ENCODE measurements at regions of chr22 and their contacts with region 1.

Region 1: DNA sequence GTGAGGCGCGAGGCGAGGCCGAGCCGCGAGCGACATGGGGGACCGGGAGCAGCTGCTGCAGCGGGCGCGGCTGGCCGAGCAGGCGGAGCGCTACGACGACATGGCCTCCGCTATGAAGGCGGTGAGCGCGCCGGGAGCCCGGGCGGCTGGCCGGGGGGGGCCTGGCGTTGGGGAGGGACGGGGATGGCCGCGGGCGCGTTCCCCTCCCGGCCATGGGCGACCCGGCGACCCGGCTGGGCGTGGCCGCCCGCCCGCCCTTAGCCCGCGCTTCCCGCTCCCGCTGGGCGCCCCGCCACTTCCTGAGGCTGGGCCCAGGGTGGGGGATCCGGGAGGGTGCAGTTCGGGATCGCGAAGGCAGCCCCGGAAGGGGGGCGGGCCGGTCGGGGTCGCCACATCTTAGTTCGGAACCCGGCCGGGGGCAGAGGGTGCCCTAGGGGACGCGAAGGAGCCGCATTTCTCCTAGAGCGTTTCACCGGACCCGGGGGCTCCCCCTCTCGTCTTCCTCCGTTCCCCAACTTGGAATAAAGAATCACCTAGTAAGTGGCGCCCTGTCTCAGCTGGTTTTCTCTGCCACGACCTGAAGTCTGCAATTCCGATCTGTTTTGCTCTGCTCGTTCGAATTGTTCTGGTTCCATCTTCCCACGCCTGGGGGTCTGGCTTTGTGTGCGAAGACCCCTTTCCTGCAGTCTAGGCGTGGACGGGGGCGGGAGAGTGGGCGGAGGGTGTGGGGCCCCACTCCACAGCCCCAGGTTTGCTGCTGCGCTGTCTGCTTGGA is 552 bp downstream of the YWHAH start:
- H3K4me3 Mint-ChIP-seq: no peak overlapping the region
- H3K27ac Mint-ChIP-seq: no peak overlapping the region
- H3K4me1 Mint-ChIP-seq: peaks cover 39% of the 10 kb centered on the region
- H3K27me3 Mint-ChIP-seq: no peaks in the 10 kb centered on the region

Region 2: GRCh38 chr22:31661851-31662656 is 282.8 kb before region 1 on chr22 and contains the start of gene PISD:
- intact Hi-C with region 1: loop called (anchors 5 kb)
- H3K4me3 Mint-ChIP-seq: peak within 1 kb of the TSS; percentile 90
- H3K27ac Mint-ChIP-seq: peak within 1 kb of the TSS; percentile 90
- H3K4me1 Mint-ChIP-seq: peaks cover 19% of the 10 kb centered on the region
- H3K27me3 Mint-ChIP-seq: no peaks in the 10 kb centered on the region

Region 3: DNA sequence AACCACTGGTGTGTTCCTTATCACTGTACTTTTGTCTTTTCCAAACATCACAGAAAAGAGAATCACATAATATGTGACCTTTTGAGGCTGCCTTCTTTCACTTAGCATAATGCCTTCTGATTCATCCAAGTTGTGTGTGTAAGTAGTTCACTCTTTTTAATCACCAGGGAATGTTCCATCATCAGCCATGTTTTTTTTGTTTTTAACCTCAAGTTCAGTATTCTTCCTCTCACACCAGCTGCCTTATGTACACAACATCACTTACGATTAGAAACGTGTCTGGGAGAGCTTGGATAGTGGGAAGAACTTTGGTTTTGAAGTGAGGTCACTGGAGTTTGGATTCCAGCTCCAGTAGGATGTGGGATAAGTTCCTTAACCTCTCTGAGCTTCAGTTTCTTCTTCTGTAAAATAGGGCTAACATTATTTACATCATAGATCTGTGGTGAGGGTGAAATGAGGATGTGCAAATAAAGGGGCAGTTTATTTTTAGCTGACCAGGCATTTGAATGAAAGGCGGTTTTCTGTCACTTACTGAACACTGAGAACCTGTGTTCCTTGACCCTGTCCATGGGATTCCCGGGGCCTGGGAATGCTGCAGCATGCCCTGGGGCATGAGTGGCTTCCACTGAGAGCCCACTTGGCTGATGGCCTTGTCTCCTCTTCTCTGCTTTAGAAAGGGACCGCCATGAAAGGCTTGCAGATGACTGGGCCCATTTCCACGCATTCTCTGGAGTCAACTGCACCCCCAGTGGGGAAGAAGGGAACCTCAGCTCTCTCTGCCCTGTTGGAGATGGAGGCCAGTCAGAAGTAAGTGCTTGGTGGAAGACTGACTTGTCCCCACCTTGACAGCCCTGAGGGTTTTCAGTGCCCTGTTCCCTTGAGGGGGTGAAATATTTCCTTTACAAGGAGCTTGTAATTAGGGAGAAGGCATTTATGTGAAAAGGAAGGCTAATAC is 98.4 kb before region 1 on chr22:
- intact Hi-C with region 1: loop called (anchors 5 kb)
- H3K4me3 Mint-ChIP-seq: no peak overlapping the region
- H3K27ac Mint-ChIP-seq: no peak overlapping the region
- H3K4me1 Mint-ChIP-seq: peaks cover 14% of the 10 kb centered on the region
- H3K27me3 Mint-ChIP-seq: no peaks in the 10 kb centered on the region

Region 4: DNA sequence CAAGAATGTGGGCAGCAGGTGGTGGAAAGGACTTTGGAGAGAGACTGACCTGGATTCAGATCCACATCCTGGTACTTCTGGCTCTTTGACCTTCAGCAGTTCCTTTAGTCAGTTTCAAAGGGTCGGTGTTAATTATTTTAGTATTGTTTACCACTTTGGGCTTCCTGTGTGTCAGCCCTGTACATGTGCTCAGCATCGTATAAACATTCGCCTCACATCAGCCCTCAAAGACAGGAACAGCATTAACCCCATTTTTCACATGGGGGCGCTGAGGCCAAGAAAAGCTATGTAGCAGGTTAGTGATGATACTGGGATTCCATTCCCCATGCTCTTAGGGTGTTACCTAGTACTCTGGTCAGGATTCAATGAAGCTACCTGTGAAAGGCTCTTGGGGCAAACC is 72.7 kb before region 1 on chr22:
- intact Hi-C with region 1: loop called (anchors 5 kb)
- H3K4me3 Mint-ChIP-seq: no peak overlapping the region
- H3K27ac Mint-ChIP-seq: no peak overlapping the region
- H3K4me1 Mint-ChIP-seq: peaks cover 44% of the 10 kb centered on the region
- H3K27me3 Mint-ChIP-seq: no peaks in the 10 kb centered on the region

Region 5: DNA sequence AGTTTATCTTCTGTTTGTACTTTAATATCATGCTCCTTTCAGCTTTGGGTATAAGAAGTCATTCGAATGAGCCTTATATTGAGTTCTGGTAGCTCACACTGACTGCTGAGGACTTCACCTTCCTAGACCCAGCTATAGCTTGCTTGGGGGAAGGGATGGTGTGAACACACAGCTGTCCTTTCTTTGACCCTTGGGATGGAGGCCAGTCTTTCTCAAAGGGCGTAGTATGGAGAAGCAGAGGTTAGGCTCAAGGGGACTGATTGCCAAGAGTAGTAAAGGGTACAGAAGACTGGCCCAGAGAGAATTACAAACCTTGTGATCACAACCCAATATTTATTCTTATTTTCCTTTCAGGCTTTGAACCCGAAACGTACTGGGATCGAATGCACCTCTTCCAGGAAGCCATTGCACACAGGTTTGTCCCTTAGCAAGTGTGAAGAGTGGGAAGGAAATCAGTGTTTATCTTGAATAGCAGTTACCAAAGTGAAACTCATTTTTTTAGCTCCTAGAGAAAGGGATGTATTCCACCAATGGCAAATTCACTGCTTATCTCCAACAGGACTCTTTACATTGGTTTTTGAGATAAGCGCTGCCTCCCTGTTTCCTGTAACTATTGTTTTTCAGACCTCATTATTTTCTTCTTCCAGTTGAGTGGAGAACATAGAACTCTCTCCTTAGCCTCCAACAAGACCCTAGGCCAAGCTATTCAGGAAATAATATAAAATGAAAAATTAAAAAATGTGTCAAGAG is 43.3 kb before region 1 on chr22:
- intact Hi-C with region 1: loop called (anchors 5 kb)
- H3K4me3 Mint-ChIP-seq: no peak overlapping the region
- H3K27ac Mint-ChIP-seq: no peak overlapping the region
- H3K4me1 Mint-ChIP-seq: peaks cover 21% of the 10 kb centered on the region
- H3K27me3 Mint-ChIP-seq: no peaks in the 10 kb centered on the region

Region 6: DNA sequence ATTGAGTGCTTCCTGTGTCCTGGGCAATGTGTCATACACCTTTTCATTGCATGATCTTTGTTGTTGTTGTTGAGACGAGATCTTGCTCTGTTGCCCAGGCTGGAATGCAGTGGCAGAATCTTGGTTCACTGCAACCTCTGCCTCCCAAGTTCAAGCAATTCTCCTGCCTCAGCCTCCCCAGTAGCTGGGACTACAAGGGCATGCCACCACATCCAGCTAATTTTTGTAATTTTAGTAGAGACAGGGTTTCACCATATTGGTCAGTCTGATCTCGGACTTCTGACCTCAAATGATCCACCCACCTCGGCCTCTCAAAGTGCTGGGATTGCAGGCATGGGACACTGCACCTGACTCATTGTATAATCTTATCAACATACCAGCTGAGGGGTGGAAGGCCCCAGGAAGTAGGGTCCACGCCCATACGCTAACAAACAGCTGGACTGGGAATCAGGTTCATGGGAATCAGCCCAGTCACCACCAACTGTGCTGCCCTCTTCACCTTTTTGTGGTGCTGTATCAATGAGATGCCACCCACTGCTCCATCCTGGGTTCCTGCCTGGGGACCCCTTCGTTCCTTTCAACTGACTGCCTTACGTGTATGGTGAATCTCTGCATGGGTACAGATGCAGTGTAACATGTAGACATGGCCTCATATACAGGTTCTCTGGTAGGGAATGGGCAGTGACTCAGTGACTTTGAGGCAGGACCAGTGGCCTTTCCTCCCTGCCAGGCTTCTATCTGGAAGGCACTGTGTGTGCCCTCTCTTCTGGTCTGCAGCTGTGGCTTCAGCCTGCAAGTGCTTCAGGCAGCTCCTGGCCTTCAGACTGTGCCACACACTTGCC is 33.1 kb before region 1 on chr22:
- intact Hi-C with region 1: no loop called
- H3K4me3 Mint-ChIP-seq: no peak overlapping the region
- H3K27ac Mint-ChIP-seq: no peak overlapping the region
- H3K4me1 Mint-ChIP-seq: peaks cover 18% of the 10 kb centered on the region
- H3K27me3 Mint-ChIP-seq: no peaks in the 10 kb centered on the region

Region 7: GRCh38 chr22:32103658-32104315 is 158.9 kb after region 1 on chr22:
- intact Hi-C with region 1: no loop called
- H3K4me3 Mint-ChIP-seq: no peak overlapping the region
- H3K27ac Mint-ChIP-seq: no peak overlapping the region
- H3K4me1 Mint-ChIP-seq: no peaks in the 10 kb centered on the region
- H3K27me3 Mint-ChIP-seq: peaks cover 12% of the 10 kb centered on the region

Region 8: GRCh38 chr22:32144496-32145274 is 199.8 kb after region 1 on chr22:
- intact Hi-C with region 1: no loop called
- H3K4me3 Mint-ChIP-seq: no peak overlapping the region
- H3K27ac Mint-ChIP-seq: peak overlapping the region; percentile 55
- H3K4me1 Mint-ChIP-seq: peaks cover 56% of the 10 kb centered on the region
- H3K27me3 Mint-ChIP-seq: no peaks in the 10 kb centered on the region